H1 (cell line): ENCODE measurements at regions of chr6 and their contacts with region 1.

Region 1: GRCh38 chr6:80094017-80094416 is 12.5 kb upstream of the BCKDHB start:
- DNase-seq: no peak
- H3K4me3 ChIP-seq: no peak overlapping the region
- H3K27ac ChIP-seq: no peak overlapping the region
- H3K4me1 ChIP-seq: no peaks in the 10 kb centered on the region
- H3K27me3 ChIP-seq: no peaks in the 10 kb centered on the region
- CTCF ChIP-seq: peak in 2 of 3 experiments; percentile 21 to 35; a peak in 2 of 4 replicates
- EP300 ChIP-seq: no peak
- POLR2A ChIP-seq: no peak
- RAD21 ChIP-seq: peak; percentile 62 to 64

Region 2: GRCh38 chr6:80077067-80077466 is 16.9 kb before region 1 on chr6:
- CTCF ChIA-PET with region 1: interaction called, 11 read pairs
- POLR2A ChIA-PET with region 1: no interaction called
- DNase-seq: no peak
- H3K4me3 ChIP-seq: no peak overlapping the region
- H3K27ac ChIP-seq: no peak overlapping the region
- H3K4me1 ChIP-seq: peaks cover 0 to 4% (median 0%) of the 10 kb centered on the region in 4 experiments; a peak in 2 of 7 replicates
- H3K27me3 ChIP-seq: no peaks in the 10 kb centered on the region
- CTCF ChIP-seq: no peak
- EP300 ChIP-seq: no peak
- POLR2A ChIP-seq: no peak
- RAD21 ChIP-seq: no peak

Region 3: DNA sequence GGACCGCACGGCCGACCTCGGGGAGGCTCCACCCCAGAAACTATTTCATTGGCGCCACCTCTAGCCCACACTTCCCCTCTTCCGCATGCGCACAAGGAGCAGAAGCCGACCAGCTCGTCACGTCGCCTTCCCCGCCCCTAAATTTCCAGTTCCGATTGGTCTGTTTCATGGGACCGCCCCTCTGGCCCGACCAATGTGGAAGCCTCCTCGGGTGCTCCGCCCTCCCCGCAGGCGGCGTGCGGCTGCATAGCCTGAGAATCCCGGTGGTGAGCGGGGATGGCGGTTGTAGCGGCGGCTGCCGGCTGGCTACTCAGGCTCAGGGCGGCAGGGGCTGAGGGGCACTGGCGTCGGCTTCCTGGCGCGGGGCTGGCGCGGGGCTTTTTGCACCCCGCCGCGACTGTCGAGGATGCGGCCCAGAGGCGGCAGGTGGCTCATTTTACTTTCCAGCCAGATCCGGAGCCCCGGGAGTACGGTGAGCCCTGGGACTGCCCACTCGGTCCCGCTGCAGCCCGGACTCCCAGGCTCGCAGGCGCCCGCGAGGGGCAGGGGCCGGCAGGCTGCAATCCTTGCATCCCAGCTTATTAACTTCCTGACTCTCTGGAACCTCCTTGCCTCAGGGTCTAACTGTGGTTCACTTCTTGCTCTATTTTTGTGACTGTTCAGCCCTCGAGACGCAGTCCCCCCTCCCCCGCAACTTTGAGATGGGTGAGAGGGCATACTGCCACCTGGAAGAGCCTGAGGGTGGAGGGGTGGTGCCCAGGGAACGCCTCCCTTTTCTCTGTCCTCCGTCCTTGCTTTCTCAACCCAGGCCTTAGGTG is 12.6 kb after region 1 on chr6 and contains the start of gene BCKDHB:
- CTCF ChIA-PET with region 1: interaction called, 4 read pairs
- POLR2A ChIA-PET with region 1: interaction called, 10 read pairs
- DNase-seq: peak; percentile 94 to 96
- H3K4me3 ChIP-seq: peak within 1 kb of the TSS; percentile 87 to 94 (median 90)
- H3K27ac ChIP-seq: peak within 1 kb of the TSS; percentile 84
- H3K4me1 ChIP-seq: peaks cover 0 to 3% (median 0%) of the 10 kb centered on the region in 4 experiments; a peak in 3 of 7 replicates
- H3K27me3 ChIP-seq: no peaks in the 10 kb centered on the region
- CTCF ChIP-seq: no peak
- EP300 ChIP-seq: peak in 1 of 2 experiments; percentile 74; a peak in 2 of 3 replicates
- POLR2A ChIP-seq: peak; percentile 94 to 99
- RAD21 ChIP-seq: no peak
- total RNA-seq, gene BCKDHB: 26.2 and 30.8 TPM in 2 replicates